GM10248 (cell line): ENCODE measurements at regions of chr11 and their contacts with region 1.

Region 1: GRCh38 chr11:85647604-85648299 is at the start of gene TMEM126A:
- DNase-seq: peak; percentile 89
- CTCF ChIP-seq: no peak

Region 2: DNA sequence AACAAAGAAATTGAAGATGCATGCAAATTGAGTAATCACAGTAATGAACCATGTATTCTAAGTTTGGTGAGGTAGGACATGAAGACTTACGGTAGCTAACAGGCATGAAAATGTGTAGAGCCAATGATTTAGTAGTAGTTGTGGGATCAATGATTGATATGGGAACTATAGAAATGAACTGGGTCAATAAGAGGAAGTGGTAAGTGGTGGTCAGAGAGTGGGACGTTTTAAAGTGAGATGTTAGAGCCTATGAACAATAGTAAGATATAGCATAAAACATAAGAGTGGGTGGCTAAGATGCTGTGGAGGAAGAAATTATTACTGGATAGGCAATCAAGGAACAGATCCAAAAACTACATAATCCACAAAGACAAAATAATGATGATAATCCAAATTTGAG is 65.6 kb before region 1 on chr11:
- CTCF ChIA-PET with region 1: no interaction called
- POLR2A ChIA-PET with region 1: no interaction called
- DNase-seq: no peak
- CTCF ChIP-seq: no peak

Region 3: DNA sequence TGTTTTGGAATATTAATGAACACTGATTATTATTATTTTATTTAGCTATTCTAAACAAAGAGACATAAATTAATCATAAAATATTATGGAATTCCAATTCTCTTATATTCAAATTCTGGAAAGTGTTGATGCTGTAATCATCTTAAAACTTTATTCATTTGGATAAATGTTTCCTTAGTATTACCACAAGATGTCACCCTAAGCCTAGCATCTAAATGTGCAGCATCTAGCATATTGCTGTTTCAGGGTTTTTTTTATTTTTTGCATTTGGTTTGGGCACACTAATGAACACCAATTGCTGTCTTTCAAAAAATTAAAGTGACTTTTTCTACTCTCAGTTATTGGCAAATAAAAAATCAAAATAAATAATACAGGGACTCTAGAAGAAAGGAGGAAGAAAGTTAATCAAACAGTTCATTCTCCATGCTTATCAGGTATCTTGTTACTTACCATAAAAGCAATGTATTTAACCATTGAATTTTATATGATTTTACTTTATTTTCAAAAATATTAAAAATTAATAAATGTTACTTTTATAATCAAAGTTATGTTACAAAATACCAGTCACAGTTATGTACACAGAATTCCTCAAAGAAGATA is 52.4 kb before region 1 on chr11:
- CTCF ChIA-PET with region 1: no interaction called
- POLR2A ChIA-PET with region 1: no interaction called
- DNase-seq: peak; percentile 35
- CTCF ChIP-seq: peak; percentile 37

Region 4: DNA sequence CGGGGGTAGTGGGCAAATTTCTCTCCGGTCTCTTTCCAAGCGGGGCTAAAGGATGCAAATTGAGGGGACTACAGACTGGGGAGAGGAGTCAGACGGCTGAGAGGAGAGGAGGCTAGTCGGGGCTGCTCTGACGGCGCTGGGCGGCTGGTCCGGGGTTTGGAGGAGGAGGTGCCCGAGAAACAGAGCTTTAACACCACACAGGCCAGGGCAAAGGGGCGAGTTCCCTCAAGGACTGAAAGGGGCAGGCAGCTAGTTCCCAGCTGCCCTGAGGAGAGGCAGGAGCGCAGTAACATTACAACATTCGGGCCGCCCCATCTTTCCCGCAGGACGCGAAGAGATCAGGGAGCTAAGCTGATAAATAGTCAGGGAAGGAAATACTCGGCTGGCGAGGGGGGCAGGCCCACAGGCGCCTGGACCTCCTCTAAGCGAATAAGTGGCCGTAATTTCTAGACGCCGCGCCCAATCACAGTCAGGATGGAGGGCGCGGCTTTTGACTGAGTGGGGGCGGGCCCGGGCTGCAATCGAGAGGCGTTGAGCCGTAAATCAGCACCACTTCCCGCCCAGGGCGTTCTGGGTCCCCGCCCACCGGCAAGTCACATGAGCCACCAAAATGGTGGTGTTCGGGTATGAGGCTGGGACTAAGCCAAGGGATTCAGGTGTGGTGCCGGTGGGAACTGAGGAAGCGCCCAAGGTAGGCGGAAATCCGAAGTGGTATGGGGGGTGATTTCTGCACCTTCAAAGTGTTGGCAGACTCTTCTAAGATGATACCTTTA is 19.6 kb before region 1 on chr11 and contains the start of gene TMEM126B:
- CTCF ChIA-PET with region 1: interaction called, 10 read pairs
- POLR2A ChIA-PET with region 1: interaction called, 11 read pairs
- DNase-seq: peak; percentile 91
- CTCF ChIP-seq: no peak

Region 5: DNA sequence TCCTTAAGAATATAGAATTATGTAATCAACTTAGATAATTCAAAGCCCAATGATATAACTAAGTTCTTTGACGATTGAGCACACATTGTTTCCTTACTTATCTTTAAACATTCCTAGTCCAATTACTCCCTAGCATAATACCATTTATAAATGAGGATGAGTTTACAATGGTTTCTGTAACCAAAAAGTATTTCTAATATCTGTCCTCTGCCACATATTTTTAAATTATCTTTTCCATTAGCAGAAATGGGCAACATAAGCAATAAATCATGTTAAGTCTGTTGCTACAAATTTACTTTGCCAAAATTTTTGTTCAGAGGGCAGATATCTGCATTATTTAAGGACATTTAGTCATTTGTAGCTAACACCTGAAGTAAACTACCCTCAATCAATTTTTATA is 10.4 kb after region 1 on chr11:
- CTCF ChIA-PET with region 1: interaction called, 27 read pairs
- POLR2A ChIA-PET with region 1: interaction called, 11 read pairs
- DNase-seq: no peak
- CTCF ChIP-seq: no peak

Region 6: DNA sequence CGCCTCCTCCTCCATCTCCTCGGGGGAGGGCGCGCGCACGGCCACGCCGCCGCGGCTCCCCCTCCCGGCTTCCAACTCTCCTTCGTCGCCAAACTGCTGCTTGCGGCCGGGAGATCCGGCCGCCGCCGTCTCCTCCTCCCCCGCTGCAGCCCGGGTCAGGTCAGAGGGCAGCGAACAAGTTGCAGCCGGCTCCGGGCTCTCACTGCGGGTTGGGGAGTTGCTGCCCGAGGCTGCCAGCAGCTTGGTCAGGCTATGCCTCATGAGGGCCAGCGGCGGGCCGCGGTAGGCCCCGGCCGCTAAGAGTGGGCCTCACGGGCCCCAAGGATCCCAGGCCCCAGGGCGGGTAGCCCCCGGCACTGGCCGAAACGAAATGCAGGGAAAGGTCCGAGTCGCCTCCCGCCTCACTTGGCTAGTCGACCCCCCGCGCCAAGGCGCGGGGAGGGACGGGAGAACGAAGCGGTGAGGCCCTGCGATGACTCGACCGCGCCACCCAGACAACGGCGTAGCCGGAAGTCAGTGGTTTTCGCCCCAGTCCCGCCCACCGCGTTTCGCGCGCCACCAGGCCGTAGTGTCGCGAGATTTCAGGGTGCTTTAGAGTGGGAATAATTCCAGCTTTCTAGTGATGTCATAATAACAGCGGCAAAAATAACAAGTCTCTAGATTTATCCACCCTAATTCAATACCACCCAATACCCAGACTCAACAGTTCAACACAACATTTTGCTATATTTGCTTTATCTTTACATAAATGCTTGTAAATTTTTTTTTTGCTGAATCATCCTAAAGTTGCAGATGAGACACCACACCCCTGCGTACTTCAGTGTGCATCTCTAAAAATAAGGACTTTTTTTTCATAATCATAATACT is 17.1 kb after region 1 on chr11 and contains the start of gene CREBZF:
- CTCF ChIA-PET with region 1: interaction called, 27 read pairs
- POLR2A ChIA-PET with region 1: interaction called, 11 read pairs
- DNase-seq: peak; percentile 93
- CTCF ChIP-seq: no peak

Region 7: DNA sequence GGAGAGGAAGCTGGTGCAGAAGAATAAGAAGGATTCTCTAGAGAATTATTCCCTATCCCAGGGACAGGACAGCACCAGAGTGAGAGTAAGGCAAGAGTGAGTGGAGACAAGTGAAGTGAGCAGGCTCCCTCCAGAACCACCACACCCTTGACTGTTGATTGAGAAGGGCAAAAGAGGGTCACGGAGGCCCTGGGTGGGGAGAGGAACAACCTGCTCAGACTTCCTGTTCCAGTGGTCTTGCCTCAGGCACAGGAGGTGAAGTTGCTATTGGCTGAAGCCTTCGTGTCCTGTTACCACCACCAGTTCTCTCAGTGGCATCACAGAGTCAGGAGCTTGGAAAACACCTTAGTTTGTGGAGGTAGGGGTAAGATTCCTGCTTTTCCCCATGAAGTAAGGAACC is 90.0 kb after region 1 on chr11:
- CTCF ChIA-PET with region 1: no interaction called
- POLR2A ChIA-PET with region 1: no interaction called
- DNase-seq: no peak
- CTCF ChIP-seq: no peak